Gastrocnemius medialis (tissue), 4 donors: ENCODE measurements at regions of chr6 and their contacts with region 1.

Region 1: GRCh38 chr6:105992315-105992961 is 93.7 kb upstream of the PRDM1 start:
- DNase-seq: peak; percentile 58 to 75
- ATAC-seq: peak; percentile 77 to 87
- H3K4me3 ChIP-seq: peak overlapping the region; percentile 70 to 98 (median 82)
- H3K27ac ChIP-seq: peak overlapping the region in 3 of 4 donors; percentile 24 to 33 (median 27)
- H3K4me1 ChIP-seq: peaks cover 16 to 19% of the 10 kb centered on the region in 2 donors
- H3K27me3 ChIP-seq: peaks cover 48 to 59% (median 52%) of the 10 kb centered on the region in 3 donors
- CTCF ChIP-seq: peak in 2 of 5 experiments; percentile 8 to 23
- POLR2A ChIP-seq: peak in 1 of 2 donors; percentile 31

Region 2: DNA sequence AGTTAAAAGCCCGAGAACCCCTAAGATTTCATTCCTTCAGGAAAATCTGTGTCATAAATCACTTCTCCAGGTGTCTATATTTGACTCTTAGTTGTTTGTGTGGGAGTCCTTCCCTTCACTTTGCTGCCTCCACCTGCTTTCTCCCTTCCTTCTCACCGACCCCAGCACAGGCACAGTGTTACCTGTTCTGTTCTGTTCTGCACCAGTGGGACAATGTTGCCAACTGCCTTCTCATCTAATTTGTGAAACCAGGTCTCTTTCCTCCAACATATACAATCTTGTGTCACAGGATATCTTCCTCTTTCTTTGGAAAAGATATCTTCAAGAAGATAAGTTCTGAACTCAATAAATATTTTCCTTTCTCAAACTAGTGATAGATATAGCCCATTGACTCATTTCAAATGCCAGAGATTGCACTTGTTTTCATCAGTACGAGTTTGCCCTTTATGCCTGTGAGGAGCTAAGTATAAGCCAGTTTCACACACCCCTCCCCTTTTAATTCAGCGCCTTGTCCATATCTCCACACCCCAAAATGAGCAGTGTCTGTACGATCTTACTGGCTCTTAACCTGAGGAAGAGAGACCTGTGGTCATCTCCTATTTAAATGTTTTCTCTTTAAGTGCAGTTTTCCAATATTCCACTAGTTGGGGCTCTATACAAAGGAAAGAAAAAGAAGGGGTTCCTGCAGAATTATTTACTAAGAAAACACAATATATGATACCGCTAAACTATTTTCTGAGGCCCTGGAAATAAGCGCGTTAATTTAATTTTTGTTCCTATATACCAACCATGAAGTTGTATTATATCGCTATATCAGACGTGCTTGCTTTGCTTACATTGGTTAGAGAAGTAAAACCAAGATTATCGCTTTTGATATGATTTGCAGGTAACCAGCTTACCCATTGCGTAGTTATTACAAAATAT is 507.9 kb before region 1 on chr6:
- in situ Hi-C with region 1: no loop called
- intact Hi-C with region 1: loop called (anchors 10 kb)
- DNase-seq: no peak
- ATAC-seq: peak in 1 of 2 donors; percentile 46
- H3K4me3 ChIP-seq: no peak overlapping the region
- H3K27ac ChIP-seq: no peak overlapping the region
- H3K4me1 ChIP-seq: peaks cover 0 to 3% of the 10 kb centered on the region in 2 donors
- H3K27me3 ChIP-seq: no peaks in the 10 kb centered on the region
- CTCF ChIP-seq: peak; percentile 61 to 89 (median 77)
- POLR2A ChIP-seq: no peak

Region 3: GRCh38 chr6:105733565-105734162 is 258.8 kb before region 1 on chr6:
- in situ Hi-C with region 1: loop called in 1 of 4 experiments (anchors 25 kb)
- intact Hi-C with region 1: loop called (anchors 2 kb)
- DNase-seq: no peak
- ATAC-seq: no peak
- H3K4me3 ChIP-seq: no peak overlapping the region
- H3K27ac ChIP-seq: no peak overlapping the region
- H3K4me1 ChIP-seq: no peaks in the 10 kb centered on the region
- H3K27me3 ChIP-seq: no peaks in the 10 kb centered on the region
- CTCF ChIP-seq: peak; percentile 44 to 64 (median 56)
- POLR2A ChIP-seq: no peak

Region 4: DNA sequence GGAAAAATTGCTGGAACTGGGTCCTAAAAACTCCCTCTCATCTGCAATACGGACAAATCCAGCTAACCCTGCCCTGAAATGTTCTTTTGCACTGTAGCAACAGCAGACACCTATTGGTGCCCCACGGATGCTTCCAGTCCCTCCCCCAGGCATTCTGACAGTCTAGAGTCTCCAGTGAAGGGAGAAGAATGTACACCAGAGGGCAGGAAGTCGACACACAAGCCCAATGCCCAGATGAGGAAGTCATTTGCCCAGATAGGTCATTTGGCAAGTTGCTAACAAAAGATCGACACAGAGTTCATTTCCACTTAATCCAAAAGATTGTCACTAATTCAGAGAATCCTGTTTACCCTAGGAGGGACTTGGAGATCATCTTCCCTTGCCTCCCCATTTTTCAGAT is 199.3 kb before region 1 on chr6:
- in situ Hi-C with region 1: loop called in 1 of 4 experiments (anchors 10 kb)
- intact Hi-C with region 1: loop called (anchors 5 kb)
- DNase-seq: no peak
- ATAC-seq: no peak
- H3K4me3 ChIP-seq: no peak overlapping the region
- H3K27ac ChIP-seq: peak overlapping the region in 3 of 4 donors; percentile 81 to 91 (median 90)
- H3K4me1 ChIP-seq: peaks cover 46 to 49% of the 10 kb centered on the region in 2 donors
- H3K27me3 ChIP-seq: no peaks in the 10 kb centered on the region
- CTCF ChIP-seq: no peak
- POLR2A ChIP-seq: no peak

Region 5: DNA sequence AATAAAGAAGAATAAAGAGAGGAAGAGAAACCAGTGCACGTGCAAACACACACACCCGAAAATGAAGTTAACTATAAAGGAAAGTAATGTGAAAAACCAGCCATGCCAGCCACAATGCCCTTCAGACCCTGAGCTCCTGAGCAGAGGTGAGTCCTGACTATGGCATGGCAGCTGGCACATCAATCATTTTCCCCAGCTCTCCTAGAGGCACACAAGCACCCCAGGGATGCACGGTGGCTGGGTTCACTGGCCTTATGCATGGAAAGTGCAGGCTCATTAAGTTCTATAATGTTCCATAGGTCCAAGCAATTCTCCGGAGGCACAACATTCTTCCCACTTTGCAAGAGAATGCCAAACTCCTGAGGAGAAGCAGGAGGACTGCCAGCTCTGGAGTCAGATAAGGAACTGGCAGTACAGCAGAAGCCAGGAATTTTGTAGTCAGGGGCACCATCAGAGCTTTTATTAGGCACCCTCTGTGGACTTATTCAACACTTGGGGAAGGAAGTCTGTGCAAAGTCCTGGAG is 81.3 kb before region 1 on chr6:
- in situ Hi-C with region 1: no loop called
- intact Hi-C with region 1: loop called (anchors 5 kb)
- DNase-seq: no peak
- ATAC-seq: peak in 1 of 2 donors; percentile 39
- H3K4me3 ChIP-seq: no peak overlapping the region
- H3K27ac ChIP-seq: no peak overlapping the region
- H3K4me1 ChIP-seq: peaks cover 0 to 11% of the 10 kb centered on the region in 2 donors
- H3K27me3 ChIP-seq: no peaks in the 10 kb centered on the region
- CTCF ChIP-seq: no peak
- POLR2A ChIP-seq: no peak

Region 6: GRCh38 chr6:106085984-106086813 is 93.8 kb after region 1 on chr6 and contains the start of gene PRDM1:
- in situ Hi-C with region 1: no loop called
- intact Hi-C with region 1: loop called (anchors 5 kb)
- DNase-seq: peak; percentile 48 to 68
- ATAC-seq: peak; percentile 63 to 69
- H3K4me3 ChIP-seq: peak within 1 kb of the TSS; percentile 53 to 69 (median 59)
- H3K27ac ChIP-seq: peak within 1 kb of the TSS; percentile 29 to 54 (median 45)
- H3K4me1 ChIP-seq: peaks cover 7 to 10% of the 10 kb centered on the region in 2 donors
- H3K27me3 ChIP-seq: peaks cover 0 to 13% (median 0%) of the 10 kb centered on the region in 3 donors
- CTCF ChIP-seq: peak in 3 of 5 experiments; percentile 25 to 31 (median 28)
- POLR2A ChIP-seq: peak in 1 of 2 donors; percentile 52
- total RNA-seq, gene PRDM1: 1.6 to 2.4 (median 1.9) TPM